Mammary epithelial cell (primary cell): ENCODE measurements at regions of chr15 and their contacts with region 1.

Region 1: DNA sequence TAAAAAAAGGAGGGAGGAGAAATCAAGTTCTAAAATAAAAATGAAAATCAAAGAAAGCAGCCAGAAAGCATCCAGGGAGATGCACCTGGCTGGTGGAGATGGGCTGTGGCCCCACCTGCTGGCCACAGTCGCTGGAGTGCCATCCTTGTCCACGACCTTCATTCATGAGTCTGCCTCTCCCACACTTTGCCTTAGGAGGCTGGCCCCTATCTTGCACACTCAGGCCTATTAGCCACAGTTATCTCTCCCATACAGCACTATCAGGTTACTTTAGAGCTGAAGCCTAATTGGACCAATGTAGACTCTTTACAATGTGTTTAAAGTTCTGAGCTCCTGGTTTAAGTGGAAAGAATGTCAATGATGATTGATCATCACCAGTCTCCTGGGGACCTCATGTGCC is 392.0 kb upstream of the RORA start:
- DNase-seq: peak; percentile 10
- H3K4me3 ChIP-seq: no peak overlapping the region
- H3K27ac ChIP-seq: no peak overlapping the region
- H3K4me1 ChIP-seq: no peaks in the 10 kb centered on the region
- H3K27me3 ChIP-seq: no peaks in the 10 kb centered on the region
- CTCF ChIP-seq: peak; percentile 54 to 69

Region 2: GRCh38 chr15:61155741-61156700 is 465.1 kb before region 1 on chr15:
- CTCF ChIA-PET with region 1: no interaction called
- dilution Hi-C with region 1: no loop called
- in situ Hi-C with region 1: loop called (anchors 10 to 25 kb)
- intact Hi-C with region 1: no loop called
- DNase-seq: peak; percentile 26
- H3K4me3 ChIP-seq: no peak overlapping the region
- H3K27ac ChIP-seq: no peak overlapping the region
- H3K4me1 ChIP-seq: no peaks in the 10 kb centered on the region
- H3K27me3 ChIP-seq: no peaks in the 10 kb centered on the region
- CTCF ChIP-seq: peak in 1 of 2 donors; percentile 19

Region 3: GRCh38 chr15:61169904-61170695 is 451.0 kb before region 1 on chr15:
- CTCF ChIA-PET with region 1: no interaction called
- dilution Hi-C with region 1: no loop called
- in situ Hi-C with region 1: loop called (anchors 10 to 25 kb)
- intact Hi-C with region 1: loop called (anchors 1 kb)
- DNase-seq: no peak
- H3K4me3 ChIP-seq: no peak overlapping the region
- H3K27ac ChIP-seq: no peak overlapping the region
- H3K4me1 ChIP-seq: no peaks in the 10 kb centered on the region
- H3K27me3 ChIP-seq: no peaks in the 10 kb centered on the region
- CTCF ChIP-seq: no peak

Region 4: GRCh38 chr15:61195116-61196002 is 425.8 kb before region 1 on chr15:
- CTCF ChIA-PET with region 1: no interaction called
- dilution Hi-C with region 1: no loop called
- in situ Hi-C with region 1: no loop called
- intact Hi-C with region 1: loop called (anchors 1 kb)
- DNase-seq: peak; percentile 17
- H3K4me3 ChIP-seq: no peak overlapping the region
- H3K27ac ChIP-seq: no peak overlapping the region
- H3K4me1 ChIP-seq: peaks cover 4% of the 10 kb centered on the region
- H3K27me3 ChIP-seq: no peaks in the 10 kb centered on the region
- CTCF ChIP-seq: peak; percentile 65 to 80

Region 5: GRCh38 chr15:61216519-61216918 is 404.6 kb before region 1 on chr15:
- CTCF ChIA-PET with region 1: no interaction called
- dilution Hi-C with region 1: no loop called
- in situ Hi-C with region 1: no loop called
- intact Hi-C with region 1: loop called (anchors 2 kb)
- DNase-seq: no peak
- H3K4me3 ChIP-seq: no peak overlapping the region
- H3K27ac ChIP-seq: no peak overlapping the region
- H3K4me1 ChIP-seq: no peaks in the 10 kb centered on the region
- H3K27me3 ChIP-seq: no peaks in the 10 kb centered on the region
- CTCF ChIP-seq: peak in 1 of 2 donors; percentile 49